Caco-2 (cell line): ENCODE measurements at regions of chr4 and their contacts with region 1.

Region 1: DNA sequence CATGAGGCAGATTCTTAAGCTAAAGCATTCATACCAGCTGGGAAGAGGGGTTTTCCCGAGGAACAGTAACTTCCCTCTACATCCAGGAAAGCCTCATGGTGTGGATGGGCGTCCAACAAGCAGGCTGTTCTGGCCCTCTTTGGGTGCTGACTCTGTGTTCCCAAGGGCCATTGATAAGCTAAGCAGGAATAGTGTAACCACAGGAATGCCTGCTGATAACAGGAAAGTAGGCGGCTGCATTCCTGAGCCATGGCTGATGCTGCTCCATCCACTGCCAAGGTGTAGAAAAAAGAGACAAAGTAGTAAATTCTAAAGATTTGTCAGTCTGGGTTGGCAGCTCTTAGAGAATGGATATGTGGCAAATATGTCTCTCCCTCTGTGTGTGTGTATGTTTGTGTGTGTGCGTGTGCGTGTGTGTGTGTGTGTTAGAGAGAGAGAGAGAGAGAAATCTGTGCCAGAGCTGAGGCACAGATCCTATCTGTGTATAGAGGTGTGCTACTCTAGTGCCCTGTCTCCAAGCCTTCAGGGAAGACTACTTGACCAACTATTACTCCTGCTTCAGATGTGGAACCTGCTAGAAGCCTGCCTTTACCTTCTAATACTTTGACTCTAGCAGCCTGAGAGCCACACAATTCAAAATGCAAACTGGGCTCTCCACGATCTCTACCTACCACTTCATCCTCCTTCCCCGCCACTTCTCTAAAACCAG is 353.1 kb upstream of the NR3C2 start:
- DNase-seq: peak; percentile 57 to 70
- H3K4me3 ChIP-seq: no peak overlapping the region
- H3K4me3 Mint-ChIP-seq: peak overlapping the region; percentile 2
- H3K27ac Mint-ChIP-seq: peak overlapping the region; percentile 69
- H3K4me1 ChIP-seq: peaks cover 22% of the 10 kb centered on the region
- H3K4me1 Mint-ChIP-seq: peaks cover 18% of the 10 kb centered on the region
- H3K27me3 ChIP-seq: no peaks in the 10 kb centered on the region
- H3K27me3 Mint-ChIP-seq: no peaks in the 10 kb centered on the region
- CTCF ChIP-seq: no peak

Region 2: DNA sequence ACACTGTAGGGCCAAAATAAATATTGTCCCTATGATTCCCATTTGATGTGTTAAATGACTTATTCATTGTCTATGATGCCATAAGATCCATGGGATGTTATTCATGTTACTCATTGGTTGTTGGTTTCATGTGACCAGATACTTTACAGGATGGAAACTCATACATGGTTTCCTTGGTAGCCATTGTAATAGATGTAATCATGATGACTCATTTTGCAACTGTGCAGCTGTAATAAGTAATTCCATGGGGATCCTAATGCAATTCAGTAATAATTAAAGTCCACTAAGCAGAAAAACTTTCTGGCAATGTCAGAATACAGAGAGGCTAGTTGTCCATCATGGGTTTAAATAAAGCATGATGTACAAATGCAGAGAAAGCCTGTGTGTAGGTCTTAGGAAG is 36.6 kb after region 1 on chr4:
- CTCF ChIA-PET with region 1: no interaction called
- POLR2A ChIA-PET with region 1: no interaction called
- intact Hi-C with region 1: no loop called
- DNase-seq: no peak
- H3K4me3 ChIP-seq: no peak overlapping the region
- H3K4me3 Mint-ChIP-seq: no peak overlapping the region
- H3K27ac Mint-ChIP-seq: no peak overlapping the region
- H3K4me1 ChIP-seq: no peaks in the 10 kb centered on the region
- H3K4me1 Mint-ChIP-seq: no peaks in the 10 kb centered on the region
- H3K27me3 ChIP-seq: no peaks in the 10 kb centered on the region
- H3K27me3 Mint-ChIP-seq: no peaks in the 10 kb centered on the region
- CTCF ChIP-seq: no peak

Region 3: DNA sequence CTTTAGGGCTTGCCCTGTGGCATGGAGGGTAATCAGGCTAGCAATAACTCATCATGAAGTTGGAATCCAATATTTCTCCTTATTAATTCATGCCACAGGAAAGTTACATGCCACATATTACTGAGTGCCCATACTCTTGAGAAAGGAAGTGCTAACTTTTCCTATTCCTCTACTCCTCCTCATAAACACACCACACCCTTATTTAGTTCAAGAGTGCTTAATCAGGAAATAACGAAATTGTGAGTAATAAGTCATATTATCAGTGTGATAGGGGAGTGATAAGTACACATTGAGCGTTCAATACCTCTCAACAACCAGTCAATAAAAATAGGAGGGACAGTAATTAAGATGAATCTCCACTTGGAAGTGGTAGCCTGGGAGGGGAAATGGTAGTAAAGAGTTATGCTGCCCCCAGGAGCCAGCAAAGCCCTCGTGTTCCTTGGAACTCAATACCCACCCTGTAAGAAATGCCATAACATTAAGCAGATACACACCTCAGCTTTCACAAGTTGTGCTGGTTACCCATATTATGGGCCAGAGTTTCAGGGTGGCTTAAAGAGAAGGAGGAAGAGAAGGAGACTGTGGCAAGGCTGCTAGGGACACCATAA is 56.9 kb after region 1 on chr4:
- CTCF ChIA-PET with region 1: no interaction called
- POLR2A ChIA-PET with region 1: no interaction called
- intact Hi-C with region 1: loop called (anchors 5 kb)
- DNase-seq: no peak
- H3K4me3 ChIP-seq: no peak overlapping the region
- H3K4me3 Mint-ChIP-seq: no peak overlapping the region
- H3K27ac Mint-ChIP-seq: no peak overlapping the region
- H3K4me1 ChIP-seq: peaks cover 16% of the 10 kb centered on the region
- H3K4me1 Mint-ChIP-seq: peaks cover 10% of the 10 kb centered on the region
- H3K27me3 ChIP-seq: no peaks in the 10 kb centered on the region
- H3K27me3 Mint-ChIP-seq: no peaks in the 10 kb centered on the region
- CTCF ChIP-seq: no peak